Cardiac septum (tissue), 1 donor: ENCODE measurements at regions of chr12 and their contacts with region 1.

Region 1: DNA sequence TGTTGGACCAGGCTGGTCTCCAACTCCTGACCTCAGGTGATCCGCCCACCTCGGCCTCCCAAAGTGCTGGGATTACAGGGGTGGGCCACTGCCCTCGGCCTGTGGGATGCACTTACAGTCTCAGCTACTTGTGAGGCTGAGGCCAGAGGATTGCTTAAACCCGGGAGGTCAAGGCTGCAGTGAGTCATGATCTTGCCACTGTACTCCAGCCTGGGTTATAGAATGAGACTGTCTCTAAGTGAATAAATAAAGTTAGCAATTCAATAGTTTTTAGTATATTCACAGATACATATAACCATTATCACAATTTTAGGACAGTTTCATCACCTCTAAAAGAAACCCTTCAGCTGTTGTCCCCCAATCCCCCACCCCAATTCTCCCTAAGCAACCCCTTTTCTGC is 61.1 kb downstream of the HCAR2 start:
- DNase-seq: no peak

Region 2: GRCh38 chr12:122752464-122753318 is 110.7 kb after region 1 on chr12 and contains the start of gene DENR:
- intact Hi-C with region 1: loop called (anchors 2 kb)
- DNase-seq: peak; percentile 99
- total RNA-seq, gene DENR: 23.8 TPM